Activated CD4-positive, alpha-beta T cell treated with anti-CD3 and anti-CD28 coated beads for 36 hours (primary cell): ENCODE measurements at regions of chr4 and their contacts with region 1.

Region 1: DNA sequence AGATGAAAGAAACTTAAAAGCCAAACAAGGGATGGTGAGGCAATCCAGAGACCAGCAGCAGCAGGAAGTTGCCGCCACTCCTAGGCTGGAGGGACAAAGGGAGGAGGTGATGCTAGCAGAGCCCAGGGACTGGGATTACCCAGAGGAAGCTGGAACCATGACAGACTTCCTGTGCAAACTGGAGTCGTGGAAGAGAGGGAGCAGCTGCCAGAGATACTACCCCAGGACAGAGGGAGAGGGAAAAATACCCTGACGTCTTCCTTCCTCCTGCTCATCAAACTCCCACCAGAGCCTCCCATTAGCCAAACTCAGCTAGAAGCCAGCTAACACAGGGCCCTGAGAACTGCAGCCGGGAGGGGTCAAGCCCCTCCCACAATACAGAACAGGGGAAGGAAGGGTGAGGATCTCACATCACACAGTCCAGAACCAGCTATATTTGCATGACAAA is 101.2 kb upstream of the KLF3 start:
- DNase-seq: no peak
- ATAC-seq: no peak
- H3K4me3 Mint-ChIP-seq: no peak overlapping the region
- H3K27ac Mint-ChIP-seq: no peak overlapping the region
- H3K4me1 Mint-ChIP-seq: peaks cover 19% of the 10 kb centered on the region
- H3K27me3 Mint-ChIP-seq: peaks cover 8% of the 10 kb centered on the region

Region 2: GRCh38 chr4:38062088-38062893 is 500.5 kb before region 1 on chr4:
- CTCF ChIA-PET with region 1: no interaction called
- POLR2A ChIA-PET with region 1: no interaction called
- intact Hi-C with region 1: loop called in 1 of 2 experiments (anchors 5 kb)
- DNase-seq: peak; percentile 82
- ATAC-seq: peak; percentile 79
- H3K4me3 Mint-ChIP-seq: peak overlapping the region; percentile 75
- H3K27ac Mint-ChIP-seq: peak overlapping the region; percentile 87
- H3K4me1 Mint-ChIP-seq: peaks cover 14% of the 10 kb centered on the region
- H3K27me3 Mint-ChIP-seq: no peaks in the 10 kb centered on the region

Region 3: GRCh38 chr4:38455092-38455862 is 107.5 kb before region 1 on chr4:
- CTCF ChIA-PET with region 1: no interaction called
- POLR2A ChIA-PET with region 1: no interaction called
- intact Hi-C with region 1: loop called in 1 of 2 experiments (anchors 10 kb)
- DNase-seq: no peak
- ATAC-seq: peak; percentile 72
- H3K4me3 Mint-ChIP-seq: peak overlapping the region; percentile 2
- H3K27ac Mint-ChIP-seq: peak overlapping the region; percentile 57
- H3K4me1 Mint-ChIP-seq: peaks cover 54% of the 10 kb centered on the region
- H3K27me3 Mint-ChIP-seq: peaks cover 12% of the 10 kb centered on the region

Region 4: GRCh38 chr4:38523524-38524448 is 39.0 kb before region 1 on chr4:
- CTCF ChIA-PET with region 1: no interaction called
- POLR2A ChIA-PET with region 1: no interaction called
- intact Hi-C with region 1: loop called (anchors 1 kb)
- DNase-seq: peak; percentile 76
- ATAC-seq: peak; percentile 88
- H3K4me3 Mint-ChIP-seq: peak overlapping the region; percentile 9
- H3K27ac Mint-ChIP-seq: peak overlapping the region; percentile 58
- H3K4me1 Mint-ChIP-seq: peaks cover 20% of the 10 kb centered on the region
- H3K27me3 Mint-ChIP-seq: peaks cover 4% of the 10 kb centered on the region

Region 5: GRCh38 chr4:38620790-38621684 is 58.3 kb after region 1 on chr4:
- CTCF ChIA-PET with region 1: no interaction called
- POLR2A ChIA-PET with region 1: no interaction called
- intact Hi-C with region 1: loop called in 1 of 2 experiments (anchors 2 kb)
- DNase-seq: no peak
- ATAC-seq: no peak
- H3K4me3 Mint-ChIP-seq: no peak overlapping the region
- H3K27ac Mint-ChIP-seq: no peak overlapping the region
- H3K4me1 Mint-ChIP-seq: peaks cover 18% of the 10 kb centered on the region
- H3K27me3 Mint-ChIP-seq: no peaks in the 10 kb centered on the region